CD4-positive, alpha-beta memory T cell (primary cell): ENCODE measurements at regions of chr2 and their contacts with region 1.

Region 1: DNA sequence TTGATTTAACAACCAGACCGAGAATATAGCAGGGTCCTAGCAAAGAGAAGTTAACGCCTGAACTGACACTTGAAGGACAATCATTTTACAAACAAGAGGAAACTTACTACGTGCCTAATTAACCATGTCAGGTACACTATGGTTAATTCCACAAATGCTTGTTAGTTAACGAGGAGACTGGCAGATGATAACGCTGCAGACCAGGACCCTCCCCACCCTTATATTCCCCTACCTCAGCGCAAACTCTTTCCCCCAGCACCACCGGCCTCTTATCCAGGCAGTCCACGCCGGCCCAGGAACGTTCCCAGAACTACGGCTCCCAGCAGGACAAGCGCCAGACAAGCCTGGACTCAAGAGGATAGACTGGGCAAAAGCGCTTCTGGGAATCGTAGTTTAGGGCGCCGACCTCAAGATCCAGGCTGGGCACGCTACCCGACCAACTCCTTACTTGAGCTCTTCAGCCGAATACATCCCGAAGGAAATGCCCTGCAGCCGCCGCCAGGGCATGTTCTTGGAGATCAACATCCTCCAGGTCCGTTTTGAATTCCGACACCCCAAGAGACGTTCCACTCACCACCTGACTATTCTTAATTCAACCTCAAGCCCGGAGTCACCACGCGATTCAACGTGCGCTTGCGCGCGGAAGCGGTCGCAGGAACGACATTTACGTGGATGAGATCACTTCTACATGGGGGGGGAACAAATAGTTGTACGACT is at the start of gene POLR1A:
- DNase-seq: peak; percentile 88 to 91 (median 90)
- H3K4me3 ChIP-seq: peak within 1 kb of the TSS; percentile 73 to 83
- H3K4me3 Mint-ChIP-seq: peak within 1 kb of the TSS; percentile 88 to 96 (median 92)
- H3K27ac ChIP-seq: peak within 1 kb of the TSS; percentile 82
- H3K27ac Mint-ChIP-seq: peak within 1 kb of the TSS; percentile 93 to 100 (median 99)
- H3K4me1 ChIP-seq: peaks cover 34% of the 10 kb centered on the region
- H3K4me1 Mint-ChIP-seq: peaks cover 47 to 79% (median 61%) of the 10 kb centered on the region in 4 donors
- H3K27me3 ChIP-seq: no peaks in the 10 kb centered on the region
- H3K27me3 Mint-ChIP-seq: no peaks in the 10 kb centered on the region
- total RNA-seq, gene POLR1A: 23.4 to 25.8 TPM

Region 2: DNA sequence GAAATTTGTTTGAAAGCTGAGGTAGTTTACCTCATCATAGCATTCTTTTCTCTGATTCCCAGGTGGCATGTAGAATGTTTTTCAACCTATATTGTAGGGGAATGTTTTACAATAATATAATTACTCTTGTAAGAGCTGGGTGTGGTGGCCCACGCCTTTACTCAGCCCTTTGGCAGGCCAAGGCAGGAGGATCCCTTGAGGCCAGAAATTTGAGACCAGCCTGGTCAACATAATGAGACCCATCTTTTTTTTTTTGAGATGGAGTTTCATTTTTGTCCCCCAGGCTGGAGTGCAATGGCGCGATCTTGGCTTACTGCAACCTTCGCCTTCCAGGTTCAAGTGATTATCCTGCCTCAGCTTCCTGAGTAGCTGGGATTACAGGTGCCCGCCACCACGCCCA is 485.8 kb before region 1 on chr2:
- CTCF ChIA-PET with region 1: no interaction called
- POLR2A ChIA-PET with region 1: interaction called, 4 read pairs
- intact Hi-C with region 1: loop called (anchors 5 kb)
- DNase-seq: no peak
- H3K4me3 ChIP-seq: no peak overlapping the region
- H3K4me3 Mint-ChIP-seq: no peak overlapping the region
- H3K27ac ChIP-seq: no peak overlapping the region
- H3K27ac Mint-ChIP-seq: peak overlapping the region in 1 of 7 donors; percentile 60
- H3K4me1 ChIP-seq: peaks cover 31% of the 10 kb centered on the region
- H3K4me1 Mint-ChIP-seq: peaks cover 14 to 33% (median 24%) of the 10 kb centered on the region in 4 donors
- H3K27me3 ChIP-seq: no peaks in the 10 kb centered on the region
- H3K27me3 Mint-ChIP-seq: no peaks in the 10 kb centered on the region

Region 3: DNA sequence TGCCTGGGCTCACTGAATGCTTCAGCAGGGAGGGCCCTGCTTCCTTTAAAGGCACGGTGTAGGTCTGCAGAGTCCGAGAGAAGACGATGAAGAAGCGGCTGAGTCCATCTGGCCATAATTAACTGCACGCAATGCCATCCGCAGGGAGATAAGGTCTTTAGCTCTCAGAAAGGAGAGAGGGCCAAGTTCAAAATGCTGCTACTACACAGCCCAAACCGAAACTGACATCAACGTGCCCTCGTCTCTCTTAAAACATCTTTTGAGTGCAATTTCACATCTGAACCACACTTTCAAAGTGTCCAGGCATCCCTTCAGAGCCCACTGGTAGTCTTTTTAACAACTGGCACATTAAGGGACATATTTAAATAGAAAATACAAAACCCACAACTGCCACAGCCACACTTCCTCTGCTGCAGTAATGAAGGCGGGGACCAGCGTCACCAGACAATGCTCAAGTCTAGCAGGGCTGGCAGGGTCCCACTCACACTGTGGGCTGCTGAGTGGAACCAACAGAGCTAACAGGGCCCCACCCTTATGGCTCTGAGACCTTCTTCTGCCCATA is 252.4 kb before region 1 on chr2:
- CTCF ChIA-PET with region 1: interaction called, 3 read pairs
- POLR2A ChIA-PET with region 1: interaction called, 10 read pairs
- intact Hi-C with region 1: no loop called
- DNase-seq: peak; percentile 73 to 88 (median 74)
- H3K4me3 ChIP-seq: peak overlapping the region; percentile 34 to 48
- H3K4me3 Mint-ChIP-seq: peak overlapping the region; percentile 82 to 92 (median 86)
- H3K27ac ChIP-seq: peak overlapping the region; percentile 84
- H3K27ac Mint-ChIP-seq: peak overlapping the region; percentile 98 to 100 (median 100)
- H3K4me1 ChIP-seq: peaks cover 81% of the 10 kb centered on the region
- H3K4me1 Mint-ChIP-seq: peaks cover 67 to 87% (median 76%) of the 10 kb centered on the region in 4 donors
- H3K27me3 ChIP-seq: no peaks in the 10 kb centered on the region
- H3K27me3 Mint-ChIP-seq: no peaks in the 10 kb centered on the region

Region 4: GRCh38 chr2:86068136-86068588 is 37.2 kb before region 1 on chr2:
- CTCF ChIA-PET with region 1: no interaction called
- POLR2A ChIA-PET with region 1: no interaction called
- intact Hi-C with region 1: no loop called
- DNase-seq: peak; percentile 25 to 72 (median 33)
- H3K4me3 ChIP-seq: no peak overlapping the region
- H3K4me3 Mint-ChIP-seq: peak overlapping the region in 3 of 8 donors; percentile 8 to 60 (median 56)
- H3K27ac ChIP-seq: no peak overlapping the region
- H3K27ac Mint-ChIP-seq: peak overlapping the region in 6 of 7 donors; percentile 19 to 72 (median 49)
- H3K4me1 ChIP-seq: peaks cover 18% of the 10 kb centered on the region
- H3K4me1 Mint-ChIP-seq: peaks cover 9 to 21% (median 12%) of the 10 kb centered on the region in 4 donors
- H3K27me3 ChIP-seq: no peaks in the 10 kb centered on the region
- H3K27me3 Mint-ChIP-seq: no peaks in the 10 kb centered on the region

Region 5: GRCh38 chr2:86195055-86195807 is 89.8 kb after region 1 on chr2 and contains the start of gene IMMT:
- CTCF ChIA-PET with region 1: no interaction called
- POLR2A ChIA-PET with region 1: interaction called, 22 read pairs
- intact Hi-C with region 1: loop called (anchors 1 kb)
- DNase-seq: peak; percentile 92 to 95 (median 95)
- H3K4me3 ChIP-seq: peak within 1 kb of the TSS; percentile 27 to 100
- H3K4me3 Mint-ChIP-seq: peak within 1 kb of the TSS; percentile 90 to 97 (median 96)
- H3K27ac ChIP-seq: peak within 1 kb of the TSS; percentile 89
- H3K27ac Mint-ChIP-seq: peak within 1 kb of the TSS; percentile 83 to 98 (median 96)
- H3K4me1 ChIP-seq: peaks cover 57% of the 10 kb centered on the region
- H3K4me1 Mint-ChIP-seq: peaks cover 34 to 75% (median 55%) of the 10 kb centered on the region in 4 donors
- H3K27me3 ChIP-seq: no peaks in the 10 kb centered on the region
- H3K27me3 Mint-ChIP-seq: no peaks in the 10 kb centered on the region
- total RNA-seq, gene IMMT: 77.2 to 82.7 TPM